ENCODE measurements at regions of chr7 and their contacts with region 1.

Region 1: GRCh38 chr7:100119062-100119700 is at the starts of genes CNPY4 and TAF6:
- DNase-seq: peak; percentile 97
- ATAC-seq: peak; percentile 68
- H3K4me3 Mint-ChIP-seq: peak within 1 kb of the TSS; percentile 86
- H3K27ac Mint-ChIP-seq: peak within 1 kb of the TSS; percentile 94
- H3K4me1 Mint-ChIP-seq: peaks cover 19% of the 10 kb centered on the region
- H3K27me3 Mint-ChIP-seq: no peaks in the 10 kb centered on the region
- total RNA-seq, gene CNPY4: 11.0 to 14.0 TPM
- total RNA-seq, gene TAF6: 54.3 to 59.5 TPM

Region 2: DNA sequence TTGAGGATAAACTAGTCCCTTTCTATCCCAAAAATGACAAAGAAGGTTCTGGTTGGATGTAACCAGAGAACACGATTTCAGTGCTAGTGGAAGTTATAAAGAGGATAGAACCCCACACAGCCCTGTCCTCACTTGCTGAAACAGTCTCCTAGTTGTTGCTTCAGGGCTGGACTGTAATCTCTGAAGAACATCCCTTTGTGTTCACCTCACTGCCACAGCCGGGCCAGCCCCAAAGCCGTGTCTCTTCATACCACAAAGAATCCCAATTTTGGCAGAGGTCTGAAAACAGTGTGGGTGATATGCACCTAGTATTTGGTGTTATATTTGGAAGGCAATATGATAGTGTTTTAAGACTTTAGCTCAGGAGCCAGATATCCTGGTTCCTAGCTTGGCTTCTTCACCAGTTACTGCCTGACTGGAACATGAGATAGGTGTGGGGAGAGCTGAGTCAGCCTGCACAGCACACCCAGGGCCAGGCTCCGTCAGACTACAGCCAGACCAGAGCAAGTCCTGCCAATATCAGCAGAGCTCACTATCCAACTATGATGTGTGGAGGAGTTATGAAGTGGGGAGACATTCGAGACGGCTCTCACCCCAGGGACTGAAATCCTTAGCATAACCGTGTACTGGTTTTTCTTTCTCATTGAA is 356.4 kb before region 1 on chr7:
- CTCF ChIA-PET with region 1: no interaction called
- POLR2A ChIA-PET with region 1: no interaction called
- intact Hi-C with region 1: no loop called
- DNase-seq: no peak
- ATAC-seq: no peak
- H3K4me3 Mint-ChIP-seq: no peak overlapping the region
- H3K27ac Mint-ChIP-seq: no peak overlapping the region
- H3K4me1 Mint-ChIP-seq: peaks cover 5% of the 10 kb centered on the region
- H3K27me3 Mint-ChIP-seq: no peaks in the 10 kb centered on the region

Region 3: DNA sequence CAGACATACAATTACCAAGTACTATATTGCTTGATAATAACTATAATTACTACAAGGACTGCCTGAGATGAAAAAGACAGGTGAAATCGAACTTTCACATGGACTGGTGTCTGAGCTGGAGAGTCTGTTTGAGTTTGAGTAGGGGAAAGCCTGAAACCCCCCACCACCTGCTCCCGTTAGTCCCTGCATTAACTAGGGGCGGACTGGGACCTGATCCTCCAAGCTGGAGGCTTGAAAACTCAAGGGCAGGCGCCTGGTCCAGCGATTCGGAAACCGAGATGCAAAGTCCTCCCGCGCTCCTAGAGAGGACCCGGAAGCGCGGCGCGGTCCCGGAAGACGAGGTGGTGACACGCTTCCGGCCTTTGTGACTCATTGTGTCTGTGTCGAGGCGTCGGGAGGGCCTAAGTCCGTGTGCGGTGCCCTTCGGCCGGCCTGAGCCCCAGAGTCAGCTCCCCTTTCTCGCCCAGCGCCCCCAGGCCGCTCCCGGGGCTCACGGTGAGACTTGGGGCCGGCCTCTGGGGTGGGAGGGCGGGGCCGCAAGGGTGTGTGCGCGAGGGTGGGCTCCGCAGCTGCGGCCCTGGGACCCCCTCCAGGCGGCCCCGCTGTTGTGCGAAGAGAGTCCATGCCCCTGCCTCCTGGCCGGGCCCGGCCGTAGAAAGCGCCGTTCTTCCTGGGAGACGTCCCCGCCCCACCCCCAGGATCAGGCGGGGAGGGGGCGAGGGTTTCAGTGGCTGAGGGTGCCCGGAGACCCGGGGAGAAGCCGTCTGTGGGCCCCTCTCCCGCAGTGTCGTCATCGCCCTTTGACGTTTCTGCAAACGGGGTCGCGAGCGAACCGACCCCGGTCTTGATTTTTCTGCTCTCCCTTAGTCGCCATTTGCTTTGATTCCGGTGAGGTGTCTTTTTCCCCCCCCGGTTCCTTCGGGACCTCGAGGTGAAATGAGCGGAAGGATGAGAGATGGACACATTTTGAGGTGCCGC is 103.7 kb before region 1 on chr7 and contains the start of gene ZKSCAN1:
- CTCF ChIA-PET with region 1: no interaction called
- POLR2A ChIA-PET with region 1: no interaction called
- intact Hi-C with region 1: no loop called
- DNase-seq: peak; percentile 92
- ATAC-seq: peak; percentile 87
- H3K4me3 Mint-ChIP-seq: peak within 1 kb of the TSS; percentile 94
- H3K27ac Mint-ChIP-seq: peak within 1 kb of the TSS; percentile 96
- H3K4me1 Mint-ChIP-seq: peaks cover 53% of the 10 kb centered on the region
- H3K27me3 Mint-ChIP-seq: no peaks in the 10 kb centered on the region
- total RNA-seq, gene ZKSCAN1: 45.2 to 62.9 TPM

Region 4: GRCh38 chr7:100088621-100089457 is 30.3 kb before region 1 on chr7 and contains the start of gene COPS6:
- CTCF ChIA-PET with region 1: interaction called, 4 read pairs
- POLR2A ChIA-PET with region 1: interaction called, 3 read pairs
- intact Hi-C with region 1: loop called in 1 of 2 experiments (anchors 1 kb)
- DNase-seq: peak; percentile 92
- ATAC-seq: peak; percentile 67
- H3K4me3 Mint-ChIP-seq: peak within 1 kb of the TSS; percentile 89
- H3K27ac Mint-ChIP-seq: peak within 1 kb of the TSS; percentile 96
- H3K4me1 Mint-ChIP-seq: peaks cover 25% of the 10 kb centered on the region
- H3K27me3 Mint-ChIP-seq: no peaks in the 10 kb centered on the region
- total RNA-seq, gene COPS6: 88.6 to 89.0 TPM

Region 5: GRCh38 chr7:100101016-100101862 is 17.9 kb before region 1 on chr7 and contains the starts of genes AP4M1 and MCM7:
- CTCF ChIA-PET with region 1: interaction called, 4 read pairs
- POLR2A ChIA-PET with region 1: interaction called, 9 read pairs
- intact Hi-C with region 1: loop called (anchors 1 kb)
- DNase-seq: peak; percentile 99
- ATAC-seq: peak; percentile 91
- H3K4me3 Mint-ChIP-seq: peak within 1 kb of the TSS; percentile 90
- H3K27ac Mint-ChIP-seq: peak within 1 kb of the TSS; percentile 94
- H3K4me1 Mint-ChIP-seq: peaks cover 41% of the 10 kb centered on the region
- H3K27me3 Mint-ChIP-seq: no peaks in the 10 kb centered on the region
- total RNA-seq, gene AP4M1: 8.8 to 10.4 TPM
- total RNA-seq, gene MCM7: 411 to 429 TPM

Region 6: DNA sequence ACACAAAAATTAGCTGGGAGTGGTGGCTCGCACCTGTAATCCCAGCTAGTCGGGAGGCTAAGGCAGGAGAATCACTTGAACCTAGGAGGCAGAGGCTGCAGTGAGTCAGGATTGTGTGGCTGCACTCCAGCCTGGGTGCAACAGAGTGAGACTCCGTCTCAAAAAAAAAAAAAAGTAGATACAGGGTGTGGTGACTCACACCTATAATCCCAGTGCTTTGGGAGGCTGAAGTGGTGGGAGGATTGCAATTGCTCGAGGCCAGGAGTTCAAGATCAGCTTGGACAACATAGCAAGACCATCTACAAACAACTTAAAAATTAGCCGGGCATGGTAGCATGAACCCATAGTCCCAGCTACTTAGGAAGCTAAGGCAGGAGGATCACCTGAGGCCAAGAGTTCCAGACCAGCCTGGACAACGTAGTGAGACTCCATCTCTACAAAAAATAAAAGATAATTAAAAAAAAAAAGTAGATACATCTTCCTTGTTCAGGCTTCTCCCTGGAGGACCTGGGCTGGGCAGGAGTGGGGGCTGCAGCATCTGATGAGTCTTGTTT is 495.2 kb after region 1 on chr7:
- CTCF ChIA-PET with region 1: no interaction called
- POLR2A ChIA-PET with region 1: no interaction called
- intact Hi-C with region 1: no loop called
- DNase-seq: no peak
- ATAC-seq: no peak
- H3K4me3 Mint-ChIP-seq: no peak overlapping the region
- H3K27ac Mint-ChIP-seq: no peak overlapping the region
- H3K4me1 Mint-ChIP-seq: peaks cover 17% of the 10 kb centered on the region
- H3K27me3 Mint-ChIP-seq: no peaks in the 10 kb centered on the region